GM10248 (cell line): ENCODE measurements at regions of chr13 and their contacts with region 1.

Region 1: DNA sequence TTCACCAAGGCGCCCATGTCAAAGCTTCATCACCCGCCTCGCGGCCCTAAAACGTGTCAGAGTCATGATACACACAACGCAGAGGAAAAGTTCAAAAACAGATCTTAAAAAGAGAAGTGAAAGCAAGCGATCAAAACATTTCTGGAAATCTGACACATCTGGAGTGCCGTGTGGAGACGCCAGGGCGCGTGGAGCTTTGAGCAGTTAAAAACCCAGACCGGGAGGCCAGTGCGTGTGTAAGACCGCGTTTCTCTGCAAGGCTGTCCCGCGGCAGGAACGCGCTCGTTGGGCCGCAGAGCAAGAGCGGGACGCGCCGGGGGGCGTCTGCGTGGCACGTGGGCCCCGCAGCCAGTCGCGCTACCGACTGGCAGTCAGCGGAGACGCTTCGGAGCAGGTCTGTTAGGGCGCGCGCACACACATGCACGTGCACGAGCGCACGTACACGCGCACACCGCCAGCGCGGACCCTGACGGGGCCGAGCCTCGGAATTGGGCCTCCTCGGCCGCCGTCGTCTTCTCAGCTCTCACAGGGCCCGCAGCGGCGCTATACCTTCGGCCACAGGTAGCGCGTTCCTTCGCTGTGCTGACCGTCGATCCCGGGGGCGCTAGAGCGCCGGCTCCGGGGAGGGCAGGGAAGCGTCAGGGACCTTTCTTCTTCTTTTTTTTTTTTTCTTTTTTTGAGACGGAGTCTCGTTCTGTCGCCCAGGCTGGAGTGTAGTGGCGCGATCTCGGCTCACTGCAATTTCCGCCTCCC is 35.8 kb downstream of the RNF6 start:
- DNase-seq: peak; percentile 87
- CTCF ChIP-seq: peak; percentile 63

Region 2: GRCh38 chr13:26117620-26118019 is 68.7 kb before region 1 on chr13:
- CTCF ChIA-PET with region 1: no interaction called
- POLR2A ChIA-PET with region 1: no interaction called
- DNase-seq: no peak
- CTCF ChIP-seq: no peak

Region 3: DNA sequence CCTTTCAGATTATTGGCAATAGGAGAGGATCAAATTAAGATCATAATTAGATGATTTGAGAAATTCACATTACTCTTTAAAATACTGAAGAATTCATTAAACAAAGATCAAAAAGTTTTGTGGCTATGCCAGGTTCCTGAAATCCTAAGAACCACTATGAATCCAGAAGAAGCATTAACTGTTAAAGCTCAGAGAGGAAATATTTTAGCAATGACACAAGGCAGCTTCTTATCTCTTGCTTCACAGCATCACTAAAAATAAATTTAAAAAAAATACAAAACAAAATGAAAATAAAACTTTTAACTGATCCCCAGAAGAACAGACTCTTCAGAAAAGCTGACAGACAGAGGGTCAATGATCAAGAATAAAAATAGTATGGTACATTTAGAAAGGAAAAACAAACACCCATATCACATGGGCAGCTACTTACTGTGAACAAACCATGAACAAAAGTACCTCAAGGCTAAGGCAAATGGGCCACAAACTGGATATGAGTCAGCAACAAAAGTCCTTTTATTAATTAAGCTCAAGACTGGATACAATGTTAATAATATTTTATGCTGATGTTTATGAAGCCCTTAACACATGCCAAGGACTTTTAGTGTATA is 16.2 kb after region 1 on chr13:
- CTCF ChIA-PET with region 1: interaction called, 16 read pairs
- POLR2A ChIA-PET with region 1: no interaction called
- DNase-seq: no peak
- CTCF ChIP-seq: no peak

Region 4: GRCh38 chr13:26221721-26222519 is 35.6 kb after region 1 on chr13 and contains the start of gene RNF6:
- CTCF ChIA-PET with region 1: interaction called, 28 read pairs
- POLR2A ChIA-PET with region 1: no interaction called
- DNase-seq: peak; percentile 97
- CTCF ChIP-seq: no peak

Region 5: DNA sequence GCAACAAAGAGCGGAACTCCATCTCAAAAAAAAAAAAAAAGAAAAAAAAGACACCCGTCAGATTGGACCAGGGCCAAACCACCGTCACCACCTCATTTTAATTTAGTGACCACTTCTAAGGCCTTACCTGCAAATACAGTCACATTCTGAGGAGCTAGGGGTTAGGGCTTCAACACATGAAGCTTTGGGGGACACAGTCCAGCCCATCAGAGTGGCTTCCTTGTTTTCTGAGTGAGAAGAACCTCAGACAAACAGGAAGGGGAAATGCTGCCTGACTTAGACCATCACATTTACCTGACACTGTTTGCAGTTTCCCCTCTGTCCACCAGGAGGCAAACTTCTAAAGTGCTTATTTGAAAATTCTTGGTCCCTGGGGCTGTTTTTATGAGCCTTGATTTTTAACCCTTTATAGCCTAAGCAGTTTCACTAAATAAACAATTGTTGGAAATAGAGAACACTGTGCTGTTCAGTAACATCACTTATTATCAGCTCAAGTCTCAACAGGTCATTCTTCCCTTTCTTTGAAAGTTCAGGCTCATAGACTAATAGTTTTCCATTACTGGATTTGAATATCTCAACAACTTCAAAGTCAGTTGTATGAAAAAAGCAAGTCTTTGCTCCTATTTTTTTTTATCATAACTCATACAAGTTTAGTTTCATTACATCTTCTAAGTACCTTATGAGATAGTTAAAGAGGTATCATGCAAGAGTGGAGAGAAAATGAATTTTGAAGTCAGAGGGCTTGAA is 296.3 kb after region 1 on chr13:
- CTCF ChIA-PET with region 1: interaction called, 18 read pairs
- POLR2A ChIA-PET with region 1: no interaction called
- DNase-seq: peak; percentile 79
- CTCF ChIP-seq: peak; percentile 82

Region 6: DNA sequence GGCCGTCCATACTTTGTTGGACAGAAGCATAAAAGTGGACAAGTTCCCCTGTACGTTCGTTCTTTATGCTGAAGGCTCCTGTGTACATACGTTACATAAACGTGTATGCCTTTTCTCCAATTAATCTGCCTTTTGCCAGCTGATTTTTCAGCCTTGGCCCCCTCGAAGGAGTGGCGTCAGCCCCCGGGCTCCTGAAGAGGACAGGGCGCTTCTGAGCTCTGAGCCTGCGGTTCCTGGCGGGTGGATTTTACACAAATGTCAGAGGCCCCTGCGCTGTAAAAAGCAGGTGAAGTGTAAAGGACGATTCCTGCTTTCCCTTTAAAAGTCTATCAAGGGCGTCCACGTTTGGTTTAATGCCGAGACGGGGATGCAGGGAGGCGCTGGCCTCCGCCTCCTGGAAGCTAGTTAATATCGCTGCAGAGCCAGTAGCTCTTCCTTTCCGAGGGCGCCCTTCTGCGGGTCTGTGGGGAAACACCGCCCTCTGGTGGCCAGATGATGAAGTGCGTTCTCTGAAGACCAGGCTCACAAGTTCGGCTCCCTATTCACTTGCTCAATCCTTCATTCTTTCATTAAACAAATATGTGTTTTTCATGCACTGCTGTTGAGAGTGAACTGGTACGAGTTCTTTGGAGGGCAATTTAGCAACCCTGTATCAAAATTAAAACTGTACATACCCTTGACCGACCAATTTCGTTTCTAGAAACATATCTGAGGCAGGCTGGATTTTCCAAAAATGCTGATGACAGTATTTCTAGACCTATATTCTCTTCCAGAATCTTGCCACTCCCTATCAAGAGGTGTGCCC is 512.3 kb after region 1 on chr13:
- CTCF ChIA-PET with region 1: interaction called, 94 read pairs
- POLR2A ChIA-PET with region 1: no interaction called
- DNase-seq: peak; percentile 84
- CTCF ChIP-seq: peak; percentile 82